HAP-1 (cell line): ENCODE measurements at regions of chr2 and their contacts with region 1.

Region 1: DNA sequence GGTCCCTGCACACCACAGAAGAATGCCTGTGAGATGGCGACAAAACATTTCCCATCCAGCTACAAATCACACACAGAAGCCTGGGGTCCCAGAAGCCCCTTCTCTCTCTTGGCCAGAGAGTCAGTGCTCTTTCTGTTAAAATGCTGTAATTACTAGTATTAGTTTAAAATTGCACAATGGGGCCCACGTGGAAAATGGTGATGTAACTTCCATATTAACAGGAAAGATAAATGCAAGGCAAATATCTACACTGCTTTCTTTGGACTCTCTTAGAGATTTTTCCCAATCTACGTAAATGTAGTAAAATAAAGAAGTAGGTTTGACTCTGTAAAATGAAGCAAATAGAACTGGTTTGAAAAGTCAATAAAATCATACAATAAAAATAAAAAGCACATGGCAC is 113.9 kb upstream of the TFCP2L1 start:
- DNase-seq: no peak
- H3K4me3 ChIP-seq: no peak overlapping the region
- H3K4me1 ChIP-seq: no peaks in the 10 kb centered on the region
- H3K27me3 ChIP-seq: no peaks in the 10 kb centered on the region

Region 2: DNA sequence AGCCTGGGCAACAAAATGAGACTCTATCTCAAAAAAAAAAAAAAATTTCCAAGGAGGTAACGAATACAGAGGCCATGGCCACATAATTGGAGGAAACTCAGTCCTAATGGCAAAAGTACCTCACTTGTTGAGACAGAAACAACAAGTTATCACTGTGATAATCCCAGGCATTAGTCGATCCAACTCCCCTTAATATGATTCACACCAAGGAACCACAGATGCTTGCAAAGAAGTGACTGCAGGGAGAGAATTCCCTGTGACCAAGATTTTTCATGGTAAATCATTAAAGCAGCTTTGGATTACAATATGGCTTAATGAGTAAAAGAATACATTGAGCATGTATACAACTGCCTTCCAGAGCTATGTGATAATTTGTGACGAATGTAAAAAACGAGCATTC is 51.4 kb after region 1 on chr2:
- in situ Hi-C with region 1: no loop called
- DNase-seq: no peak
- H3K4me3 ChIP-seq: no peak overlapping the region
- H3K4me1 ChIP-seq: no peaks in the 10 kb centered on the region; the same call in 1 of the 2 replicates
- H3K27me3 ChIP-seq: no peaks in the 10 kb centered on the region

Region 3: DNA sequence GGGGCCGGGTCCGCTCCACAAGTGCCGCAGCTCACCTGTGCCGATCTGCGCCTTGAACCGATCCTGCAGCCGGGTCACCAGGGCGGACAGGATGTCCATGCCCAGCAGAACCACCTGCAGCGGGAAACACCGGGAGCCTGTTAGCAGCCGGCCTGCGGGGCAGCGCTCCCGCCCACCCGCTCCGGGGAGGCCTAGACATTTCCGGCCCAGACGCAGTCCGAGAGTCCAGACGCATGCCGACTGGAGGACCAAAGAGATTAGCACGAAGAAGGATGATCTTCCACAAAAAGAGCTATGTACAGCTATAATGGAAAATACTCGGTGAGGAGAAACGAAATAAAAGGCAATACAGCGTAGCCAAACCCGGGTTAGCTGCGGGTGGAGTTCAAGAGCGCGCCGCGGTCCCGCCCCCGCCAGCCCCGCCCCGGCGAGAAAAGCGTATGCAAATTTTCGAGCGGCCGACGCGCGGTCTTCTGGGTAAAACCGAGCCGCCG is 131.4 kb after region 1 on chr2:
- in situ Hi-C with region 1: loop called (anchors 10 kb)
- DNase-seq: peak; percentile 62 to 83
- H3K4me3 ChIP-seq: peak overlapping the region; percentile 47
- H3K4me1 ChIP-seq: peaks cover 22% of the 10 kb centered on the region
- H3K27me3 ChIP-seq: no peaks in the 10 kb centered on the region

Region 4: GRCh38 chr2:121649596-121650314 is 250.9 kb after region 1 on chr2:
- in situ Hi-C with region 1: no loop called
- DNase-seq: peak; percentile 95 to 96
- H3K4me3 ChIP-seq: peak overlapping the region; percentile 92
- H3K4me1 ChIP-seq: peaks cover 16% of the 10 kb centered on the region
- H3K27me3 ChIP-seq: no peaks in the 10 kb centered on the region

Region 5: DNA sequence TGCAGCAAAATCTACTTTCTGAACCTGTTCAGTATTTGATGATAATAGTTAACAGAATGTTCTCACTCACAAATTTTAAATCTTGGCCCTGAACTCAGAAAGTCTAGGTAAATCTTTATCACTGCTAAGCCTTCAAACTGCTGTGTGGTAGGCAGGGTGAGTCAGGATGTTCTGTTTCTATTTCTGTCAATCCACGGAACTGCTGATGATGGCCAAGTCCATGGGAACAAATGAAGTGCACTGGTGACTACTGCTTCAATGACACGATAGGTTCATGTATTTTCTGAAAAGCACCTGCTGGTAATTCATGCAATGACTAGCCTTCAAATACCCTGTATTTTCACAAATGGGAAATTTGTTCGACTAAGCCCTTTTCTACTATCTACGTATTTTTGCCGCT is 323.6 kb after region 1 on chr2:
- in situ Hi-C with region 1: loop called (anchors 10 kb)
- DNase-seq: no peak
- H3K4me3 ChIP-seq: no peak overlapping the region
- H3K4me1 ChIP-seq: no peaks in the 10 kb centered on the region
- H3K27me3 ChIP-seq: no peaks in the 10 kb centered on the region

Region 6: DNA sequence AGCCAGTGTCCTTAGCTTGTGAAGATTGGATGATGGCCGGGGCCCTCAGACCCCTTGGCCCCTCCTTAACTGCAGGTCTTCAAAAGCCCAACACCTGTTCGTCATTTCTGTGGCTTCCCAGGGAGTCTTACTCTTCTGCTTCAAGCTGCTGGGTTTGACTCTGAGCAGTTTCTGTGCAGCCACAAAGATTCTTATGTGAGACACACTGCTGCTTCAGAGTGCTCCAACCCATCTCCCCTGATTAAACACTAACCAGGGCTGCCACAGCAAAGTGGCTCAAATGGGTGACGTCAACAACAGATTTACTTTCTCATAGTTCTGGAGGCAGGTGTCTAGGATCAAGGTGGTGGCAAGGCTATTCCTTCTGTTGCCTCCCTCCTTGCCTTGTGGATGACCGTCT is 397.4 kb after region 1 on chr2:
- in situ Hi-C with region 1: no loop called
- DNase-seq: no peak
- H3K4me3 ChIP-seq: no peak overlapping the region
- H3K4me1 ChIP-seq: peaks cover 8% of the 10 kb centered on the region
- H3K27me3 ChIP-seq: 0 out of 2 replicates have a peak, but pooled peaks cover 5% of the 10 kb centered on the region